ENCODE measurements at regions of chr19 and their contacts with region 1.

Region 1: DNA sequence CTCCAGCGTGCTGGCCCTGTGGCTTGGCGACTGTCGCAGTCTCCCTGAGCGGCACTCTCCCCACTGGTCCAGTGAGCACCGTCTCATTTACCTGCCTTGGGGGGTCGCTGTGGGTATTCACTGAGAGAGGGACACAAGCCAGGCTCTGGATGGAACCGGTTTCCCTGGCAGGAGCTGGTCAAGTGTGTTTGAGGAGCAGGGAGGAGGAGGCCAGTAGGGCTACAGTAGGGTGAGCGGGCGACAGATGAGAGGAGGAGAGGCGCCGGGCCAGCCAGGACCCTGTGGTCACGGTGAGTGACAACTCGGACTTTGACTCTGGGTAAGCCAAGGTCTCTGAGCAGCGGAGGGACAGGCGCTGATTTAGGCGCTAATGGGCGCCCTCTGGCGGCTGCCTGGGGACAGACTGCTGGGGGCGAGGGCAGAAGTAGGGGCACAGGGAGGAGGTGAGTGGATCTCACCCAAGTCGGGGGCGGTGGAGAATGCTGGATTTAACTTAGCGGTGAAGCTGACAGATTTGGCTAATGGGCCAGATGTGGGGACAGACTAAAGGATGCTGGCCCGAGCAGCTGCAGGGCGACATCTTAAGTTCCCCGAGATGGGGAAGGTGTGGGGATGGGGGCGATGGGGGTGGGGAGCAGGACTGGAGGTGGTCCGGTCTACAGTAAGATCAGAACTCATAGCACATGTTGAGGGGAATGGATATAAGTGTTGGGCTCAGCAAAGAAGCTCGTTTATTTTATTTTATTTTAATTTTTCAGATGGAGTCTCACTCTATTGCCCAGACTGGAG is 4.7 kb upstream of the PRMT1 start:
- DNase-seq: peak; percentile 59 to 77 (median 74)
- H3K4me3 ChIP-seq: peak overlapping the region in 2 of 7 experiments; percentile 28 to 48
- H3K27ac ChIP-seq: peak overlapping the region in 1 of 2 experiments; percentile 12
- H3K4me1 ChIP-seq: peaks cover 0 to 12% (median 10%) of the 10 kb centered on the region in 4 experiments
- H3K27me3 ChIP-seq: no peaks in the 10 kb centered on the region

Region 2: GRCh38 chr19:49655570-49656455 is 16.5 kb before region 1 on chr19:
- CTCF ChIA-PET with region 1: interaction called, 15 read pairs
- POLR2A ChIA-PET with region 1: no interaction called
- DNase-seq: no peak
- H3K4me3 ChIP-seq: no peak overlapping the region
- H3K27ac ChIP-seq: no peak overlapping the region
- H3K4me1 ChIP-seq: no peaks in the 10 kb centered on the region
- H3K27me3 ChIP-seq: no peaks in the 10 kb centered on the region

Measured in common myeloid progenitor, CD34-positive (primary cell).